ENCODE measurements at regions of chr3 and their contacts with region 1.

Region 1: GRCh38 chr3:48034000-48034516 is 17.8 kb upstream of the MAP4 start:
- DNase-seq: no peak
- H3K4me3 ChIP-seq: no peak overlapping the region
- H3K27ac ChIP-seq: peak overlapping the region; percentile 80 to 87
- H3K4me1 ChIP-seq: peaks cover 6 to 47% of the 10 kb centered on the region in 2 donors
- H3K27me3 ChIP-seq: no peaks in the 10 kb centered on the region
- CTCF ChIP-seq: no peak

Region 2: GRCh38 chr3:48018841-48019240 is 15.2 kb before region 1 on chr3:
- intact Hi-C with region 1: loop called (anchors 2 kb)
- DNase-seq: peak in 1 of 2 donors; percentile 72
- H3K4me3 ChIP-seq: no peak overlapping the region
- H3K27ac ChIP-seq: peak overlapping the region; percentile 76 to 83
- H3K4me1 ChIP-seq: peaks cover 22 to 66% of the 10 kb centered on the region in 2 donors
- H3K27me3 ChIP-seq: no peaks in the 10 kb centered on the region
- CTCF ChIP-seq: no peak

Region 3: GRCh38 chr3:48119505-48120193 is 85.6 kb after region 1 on chr3:
- intact Hi-C with region 1: no loop called
- DNase-seq: no peak
- H3K4me3 ChIP-seq: no peak overlapping the region
- H3K27ac ChIP-seq: peak overlapping the region in 1 of 2 donors; percentile 27
- H3K4me1 ChIP-seq: peaks cover 0 to 7% of the 10 kb centered on the region in 2 donors
- H3K27me3 ChIP-seq: no peaks in the 10 kb centered on the region
- CTCF ChIP-seq: no peak